B cell (primary cell): ENCODE measurements at regions of chr1 and their contacts with region 1.

Region 1: DNA sequence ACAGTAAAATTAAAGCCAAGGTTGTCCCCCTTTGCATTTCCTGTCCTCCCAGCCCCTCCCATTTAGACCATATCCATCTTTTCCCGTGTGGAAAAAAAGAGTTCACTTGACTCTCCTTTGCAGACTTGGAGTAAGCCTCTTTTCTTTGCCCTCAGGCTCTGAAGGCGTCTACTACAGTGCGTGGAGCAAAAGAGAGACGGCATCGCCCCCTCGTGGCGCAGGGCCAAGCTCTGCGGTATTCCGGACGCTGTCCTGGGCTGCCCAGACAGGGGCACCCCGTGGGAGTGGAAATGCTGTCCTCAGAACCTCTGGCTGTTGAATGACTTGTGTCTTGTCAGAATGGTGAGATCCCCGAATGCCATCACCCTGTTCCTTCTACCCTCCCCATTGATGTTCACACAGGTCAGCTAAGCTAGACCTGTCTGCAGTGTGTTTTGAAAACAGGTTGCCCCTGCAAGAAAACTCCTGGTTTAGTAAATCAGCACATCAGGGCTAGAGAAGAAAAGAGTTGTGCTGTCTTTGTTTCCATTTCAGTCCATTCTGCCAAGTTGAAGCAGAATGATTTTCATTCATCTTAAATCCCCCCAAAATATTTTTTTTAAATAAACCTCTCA is 12.3 kb upstream of the GJA8 start:
- DNase-seq: peak; percentile 61
- ATAC-seq: peak; percentile 65
- H3K4me3 ChIP-seq: no peak overlapping the region
- H3K4me3 Mint-ChIP-seq: no peak overlapping the region
- H3K27ac ChIP-seq: no peak overlapping the region
- H3K27ac Mint-ChIP-seq: no peak overlapping the region
- H3K4me1 ChIP-seq: no peaks in the 10 kb centered on the region
- H3K4me1 Mint-ChIP-seq: peaks cover 2% of the 10 kb centered on the region
- H3K27me3 ChIP-seq: no peaks in the 10 kb centered on the region
- H3K27me3 Mint-ChIP-seq: peaks cover 25% of the 10 kb centered on the region
- CTCF ChIP-seq: peak; percentile 69

Region 2: GRCh38 chr1:147273409-147274336 is 616.6 kb before region 1 on chr1:
- CTCF ChIA-PET with region 1: interaction called, 37 read pairs
- POLR2A ChIA-PET with region 1: no interaction called
- intact Hi-C with region 1: no loop called
- DNase-seq: peak; percentile 59
- ATAC-seq: no peak
- H3K4me3 ChIP-seq: no peak overlapping the region
- H3K4me3 Mint-ChIP-seq: no peak overlapping the region
- H3K27ac ChIP-seq: no peak overlapping the region
- H3K27ac Mint-ChIP-seq: no peak overlapping the region
- H3K4me1 ChIP-seq: no peaks in the 10 kb centered on the region
- H3K4me1 Mint-ChIP-seq: no peaks in the 10 kb centered on the region
- H3K27me3 ChIP-seq: no peaks in the 10 kb centered on the region
- H3K27me3 Mint-ChIP-seq: no peaks in the 10 kb centered on the region
- CTCF ChIP-seq: peak; percentile 78

Region 3: GRCh38 chr1:147494998-147495580 is 395.2 kb before region 1 on chr1:
- CTCF ChIA-PET with region 1: interaction called, 31 read pairs
- POLR2A ChIA-PET with region 1: no interaction called
- intact Hi-C with region 1: loop called (anchors 1 kb)
- DNase-seq: peak; percentile 75
- ATAC-seq: peak; percentile 82
- H3K4me3 ChIP-seq: no peak overlapping the region
- H3K4me3 Mint-ChIP-seq: no peak overlapping the region
- H3K27ac ChIP-seq: no peak overlapping the region
- H3K27ac Mint-ChIP-seq: no peak overlapping the region
- H3K4me1 ChIP-seq: peaks cover 0 to 3% of the 10 kb centered on the region in 2 donors
- H3K4me1 Mint-ChIP-seq: no peaks in the 10 kb centered on the region
- H3K27me3 ChIP-seq: peaks cover 0 to 6% (median 3%) of the 10 kb centered on the region in 4 experiments
- H3K27me3 Mint-ChIP-seq: peaks cover 24% of the 10 kb centered on the region
- CTCF ChIP-seq: peak; percentile 92

Region 4: GRCh38 chr1:147723691-147724323 is 166.5 kb before region 1 on chr1:
- CTCF ChIA-PET with region 1: interaction called, 8 read pairs
- POLR2A ChIA-PET with region 1: no interaction called
- intact Hi-C with region 1: loop called (anchors 2 kb)
- DNase-seq: peak; percentile 41
- ATAC-seq: no peak
- H3K4me3 ChIP-seq: no peak overlapping the region
- H3K4me3 Mint-ChIP-seq: no peak overlapping the region
- H3K27ac ChIP-seq: no peak overlapping the region
- H3K27ac Mint-ChIP-seq: no peak overlapping the region
- H3K4me1 ChIP-seq: no peaks in the 10 kb centered on the region
- H3K4me1 Mint-ChIP-seq: no peaks in the 10 kb centered on the region
- H3K27me3 ChIP-seq: peaks cover 0 to 20% (median 2%) of the 10 kb centered on the region in 4 experiments
- H3K27me3 Mint-ChIP-seq: peaks cover 24% of the 10 kb centered on the region
- CTCF ChIP-seq: peak; percentile 30

Region 5: DNA sequence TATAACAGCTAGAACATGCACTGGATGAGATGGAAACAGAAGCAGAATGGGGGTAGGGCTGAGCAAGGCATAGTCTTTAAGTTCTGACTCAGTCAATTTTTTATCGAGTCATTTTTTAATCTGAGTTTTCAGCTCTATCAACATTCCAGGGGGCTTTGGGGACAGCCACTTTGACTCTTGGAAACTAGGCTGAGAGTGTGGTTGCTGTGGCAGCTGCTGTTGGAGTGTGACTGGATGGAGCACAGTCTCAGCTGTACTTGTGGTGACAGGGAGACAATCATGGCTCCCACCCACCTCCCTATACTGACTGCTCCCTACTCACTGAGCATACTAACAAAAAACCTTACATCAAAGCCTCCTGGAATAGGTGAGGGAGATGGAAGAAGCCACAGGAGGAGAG is 154.9 kb before region 1 on chr1:
- CTCF ChIA-PET with region 1: no interaction called
- POLR2A ChIA-PET with region 1: no interaction called
- intact Hi-C with region 1: no loop called
- DNase-seq: no peak
- ATAC-seq: no peak
- H3K4me3 ChIP-seq: no peak overlapping the region
- H3K4me3 Mint-ChIP-seq: no peak overlapping the region
- H3K27ac ChIP-seq: no peak overlapping the region
- H3K27ac Mint-ChIP-seq: no peak overlapping the region
- H3K4me1 ChIP-seq: no peaks in the 10 kb centered on the region
- H3K4me1 Mint-ChIP-seq: no peaks in the 10 kb centered on the region
- H3K27me3 ChIP-seq: no peaks in the 10 kb centered on the region
- H3K27me3 Mint-ChIP-seq: peaks cover 20% of the 10 kb centered on the region
- CTCF ChIP-seq: no peak

Region 6: GRCh38 chr1:147902183-147902845 is 12.0 kb after region 1 on chr1 and contains the start of gene GJA8:
- CTCF ChIA-PET with region 1: interaction called, 21 read pairs
- POLR2A ChIA-PET with region 1: no interaction called
- intact Hi-C with region 1: no loop called
- DNase-seq: no peak
- ATAC-seq: no peak
- H3K4me3 ChIP-seq: no peak within 1 kb of the TSS
- H3K4me3 Mint-ChIP-seq: no peak within 1 kb of the TSS
- H3K27ac ChIP-seq: no peak within 1 kb of the TSS
- H3K27ac Mint-ChIP-seq: no peak within 1 kb of the TSS
- H3K4me1 ChIP-seq: no peaks in the 10 kb centered on the region
- H3K4me1 Mint-ChIP-seq: no peaks in the 10 kb centered on the region
- H3K27me3 ChIP-seq: no peaks in the 10 kb centered on the region
- H3K27me3 Mint-ChIP-seq: peaks cover 15% of the 10 kb centered on the region
- CTCF ChIP-seq: no peak
- total RNA-seq, gene GJA8: not detected in 2 replicates

Region 7: GRCh38 chr1:148435406-148435805 is 545.1 kb after region 1 on chr1:
- CTCF ChIA-PET with region 1: no interaction called
- POLR2A ChIA-PET with region 1: no interaction called
- intact Hi-C with region 1: no loop called
- DNase-seq: no peak
- ATAC-seq: no peak
- H3K4me3 ChIP-seq: no peak overlapping the region
- H3K4me3 Mint-ChIP-seq: no peak overlapping the region
- H3K27ac ChIP-seq: no peak overlapping the region
- H3K27ac Mint-ChIP-seq: no peak overlapping the region
- H3K4me1 ChIP-seq: no peaks in the 10 kb centered on the region
- H3K4me1 Mint-ChIP-seq: peaks cover 9% of the 10 kb centered on the region
- H3K27me3 ChIP-seq: no peaks in the 10 kb centered on the region
- H3K27me3 Mint-ChIP-seq: no peaks in the 10 kb centered on the region
- CTCF ChIP-seq: no peak